Psoas muscle (tissue), 8 donors: ENCODE measurements at regions of chr15 and their contacts with region 1.

Region 1: DNA sequence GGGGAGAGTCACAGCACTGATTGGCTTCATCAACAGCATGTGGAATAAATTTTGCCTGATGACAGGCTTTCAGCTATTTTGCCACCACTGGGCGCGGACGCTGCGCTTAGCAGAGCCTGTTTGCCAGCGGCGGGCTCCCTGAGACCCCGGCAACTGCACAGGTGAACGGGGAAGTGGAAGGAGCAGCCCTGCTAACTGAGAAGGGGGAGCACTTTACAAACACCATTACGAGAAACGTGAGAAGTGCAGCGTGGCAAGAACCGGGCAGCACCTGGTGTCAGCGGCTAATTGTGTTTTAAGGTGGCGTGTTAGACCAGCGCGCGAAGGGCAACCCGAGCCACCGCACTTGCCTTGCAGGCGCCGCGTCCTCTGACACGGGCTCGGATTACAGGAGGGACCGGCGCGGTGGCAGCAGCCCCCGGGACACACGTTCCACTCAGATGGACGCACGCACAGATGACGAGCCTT is 307.8 kb upstream of the ARRDC4 start:
- DNase-seq: peak in 1 of 2 donors; percentile 54
- ATAC-seq: peak; percentile 65 to 88 (median 80)
- H3K4me3 ChIP-seq: peak overlapping the region; percentile 63
- H3K27ac ChIP-seq: peak overlapping the region; percentile 26
- H3K4me1 ChIP-seq: peaks cover 20% of the 10 kb centered on the region
- H3K27me3 ChIP-seq: peaks cover 0 to 3% (median 0%) of the 10 kb centered on the region in 3 donors
- CTCF ChIP-seq: no peak

Region 2: DNA sequence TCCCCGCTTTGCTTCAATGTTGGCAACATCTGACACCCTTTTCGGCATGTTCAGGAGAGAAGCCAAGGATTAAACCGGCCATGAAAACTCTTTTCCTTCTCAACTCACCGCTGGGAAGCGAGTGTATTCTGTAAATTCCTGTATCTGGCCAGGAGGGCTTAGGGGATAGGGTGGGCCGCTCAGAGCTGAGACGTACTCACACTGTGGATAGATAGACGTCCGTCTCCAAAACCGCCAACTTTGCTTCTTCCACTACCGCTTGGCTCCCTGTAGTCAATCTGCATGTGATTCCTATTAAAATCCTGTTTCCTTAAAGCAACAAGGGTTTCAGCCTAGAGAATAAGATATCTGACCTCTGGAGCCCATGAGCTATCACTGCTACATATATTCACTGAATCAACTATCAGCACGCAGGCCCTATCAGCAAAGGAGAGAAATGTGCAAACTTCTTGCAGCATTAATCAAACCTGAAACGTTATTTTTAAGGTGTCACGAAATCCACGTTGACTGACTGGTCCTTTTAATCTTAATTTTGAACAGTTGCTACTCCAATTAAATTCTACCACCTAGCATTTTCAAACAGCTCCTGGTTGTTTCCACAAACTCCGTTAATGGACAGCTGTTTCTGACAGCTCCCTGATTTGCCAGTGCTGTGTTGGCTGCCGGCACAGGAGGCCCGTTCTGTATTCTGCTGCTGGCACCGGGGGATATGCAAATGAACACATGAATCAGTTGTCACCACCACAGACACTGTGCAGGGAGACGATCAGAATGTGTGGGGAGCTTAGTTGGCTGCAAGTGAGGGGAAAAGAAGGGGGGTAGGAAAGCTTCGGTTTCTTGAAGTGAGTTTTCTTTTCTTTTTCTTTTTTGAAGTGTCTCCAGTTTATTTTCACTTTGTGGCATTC is 131.1 kb before region 1 on chr15:
- intact Hi-C with region 1: loop called in 1 of 2 experiments (anchors 10 kb)
- DNase-seq: peak; percentile 20 to 76
- ATAC-seq: peak; percentile 78 to 93 (median 86)
- H3K4me3 ChIP-seq: peak overlapping the region; percentile 63
- H3K27ac ChIP-seq: peak overlapping the region; percentile 90
- H3K4me1 ChIP-seq: peaks cover 14% of the 10 kb centered on the region
- H3K27me3 ChIP-seq: no peaks in the 10 kb centered on the region
- CTCF ChIP-seq: no peak

Region 3: GRCh38 chr15:97687654-97688053 is 34.9 kb after region 1 on chr15:
- intact Hi-C with region 1: loop called in 1 of 2 experiments (anchors 5 kb)
- DNase-seq: no peak
- ATAC-seq: no peak
- H3K4me3 ChIP-seq: no peak overlapping the region
- H3K27ac ChIP-seq: peak overlapping the region; percentile 18
- H3K4me1 ChIP-seq: peaks cover 15% of the 10 kb centered on the region
- H3K27me3 ChIP-seq: no peaks in the 10 kb centered on the region
- CTCF ChIP-seq: no peak

Region 4: DNA sequence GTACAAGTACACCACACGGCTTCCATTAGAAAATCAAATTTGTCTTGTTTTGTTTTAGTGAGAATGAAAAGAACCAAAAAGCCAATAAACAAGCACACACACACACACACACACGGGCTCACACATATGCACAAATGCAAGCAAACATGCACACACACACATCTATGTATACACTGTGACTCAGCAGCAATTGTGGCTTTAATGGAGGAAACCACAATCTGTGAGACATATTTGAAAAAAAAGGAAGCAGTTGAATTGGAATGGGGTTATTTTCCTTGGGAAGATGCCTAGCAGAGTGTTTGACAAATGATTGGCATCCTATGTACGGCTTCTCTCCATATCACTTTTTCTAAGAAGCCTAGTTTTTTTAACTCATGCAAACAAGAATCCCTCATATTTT is 106.6 kb after region 1 on chr15:
- intact Hi-C with region 1: no loop called
- DNase-seq: no peak
- ATAC-seq: no peak
- H3K4me3 ChIP-seq: no peak overlapping the region
- H3K27ac ChIP-seq: no peak overlapping the region
- H3K4me1 ChIP-seq: no peaks in the 10 kb centered on the region
- H3K27me3 ChIP-seq: peaks cover 0 to 2% (median 0%) of the 10 kb centered on the region in 3 donors
- CTCF ChIP-seq: no peak